Sciatic nerve (tissue), 2 donors: ENCODE measurements at regions of chr13 and their contacts with region 1.

Region 1: GRCh38 chr13:36858290-36858689 is 39.3 kb downstream of the RFXAP start:
- DNase-seq: no peak
- ATAC-seq: peak; percentile 78

Region 2: DNA sequence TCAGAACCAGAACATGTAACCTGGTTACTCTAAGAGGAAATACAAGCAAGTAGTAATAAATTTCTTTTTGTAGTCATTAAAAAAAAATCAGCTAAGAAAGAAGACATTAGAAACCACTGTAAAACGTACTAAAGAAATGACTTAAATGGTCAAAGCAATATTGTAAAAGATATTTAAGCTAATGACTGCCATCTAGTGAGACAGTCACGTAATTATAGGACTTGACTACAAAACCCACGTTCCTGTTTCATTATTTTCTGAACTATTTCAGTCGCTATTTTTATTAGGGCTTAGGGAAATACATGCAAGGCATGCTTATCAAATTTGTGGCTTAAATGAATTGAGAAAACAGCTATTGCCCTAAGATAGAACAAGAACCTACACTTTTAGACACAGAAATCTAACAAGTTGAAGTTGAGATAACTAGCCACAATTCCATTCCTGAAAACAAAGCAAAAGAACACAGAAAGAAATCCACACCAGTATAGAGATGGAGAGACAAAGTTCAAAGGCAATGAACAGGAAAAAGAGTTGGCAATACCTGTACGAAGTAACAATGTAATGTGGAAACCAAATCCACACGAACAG is 123.0 kb after region 1 on chr13:
- intact Hi-C with region 1: loop called (anchors 10 kb)
- DNase-seq: no peak
- ATAC-seq: peak; percentile 72